GM10248 (cell line): ENCODE measurements at regions of chr4 and their contacts with region 1.

Region 1: DNA sequence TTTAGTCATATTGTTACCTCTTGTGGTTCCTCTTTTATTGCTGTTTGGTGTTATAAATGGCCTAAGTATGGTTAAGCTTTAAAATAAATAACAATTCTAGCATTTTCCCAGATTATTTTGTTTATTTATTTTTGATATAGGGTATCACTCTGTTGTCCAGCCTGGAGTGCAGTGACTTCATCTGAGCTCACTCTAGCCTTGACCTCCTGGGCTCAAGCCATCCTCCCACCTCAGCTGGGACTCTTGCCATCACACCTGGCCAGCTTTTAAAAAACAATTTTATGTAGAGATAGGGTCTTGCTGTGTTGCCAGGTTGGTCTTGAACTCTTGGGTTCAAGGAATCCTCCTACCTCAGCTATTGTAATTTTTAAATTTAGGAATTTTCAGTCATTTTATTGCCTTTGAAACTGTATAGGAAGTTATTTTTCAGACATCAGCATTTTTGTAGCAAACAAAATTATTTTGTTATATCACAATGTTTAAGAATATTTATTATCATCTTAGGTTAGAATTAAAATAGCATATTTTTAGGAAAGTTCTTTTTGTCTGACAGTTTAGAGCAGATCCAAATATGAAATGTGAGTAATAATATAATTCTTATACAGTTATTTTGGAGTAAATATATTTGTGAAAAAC is 66.3 kb upstream of the RHOH start:
- DNase-seq: no peak
- CTCF ChIP-seq: no peak

Region 2: GRCh38 chr4:39846120-39846519 is 284.4 kb before region 1 on chr4:
- CTCF ChIA-PET with region 1: no interaction called
- POLR2A ChIA-PET with region 1: no interaction called
- DNase-seq: no peak
- CTCF ChIP-seq: no peak

Region 3: GRCh38 chr4:39950861-39951481 is 179.5 kb before region 1 on chr4:
- CTCF ChIA-PET with region 1: no interaction called
- POLR2A ChIA-PET with region 1: no interaction called
- DNase-seq: no peak
- CTCF ChIP-seq: no peak

Region 4: GRCh38 chr4:40118861-40119260 is 11.7 kb before region 1 on chr4:
- CTCF ChIA-PET with region 1: interaction called, 10 read pairs
- POLR2A ChIA-PET with region 1: no interaction called
- DNase-seq: no peak
- CTCF ChIP-seq: no peak

Region 5: DNA sequence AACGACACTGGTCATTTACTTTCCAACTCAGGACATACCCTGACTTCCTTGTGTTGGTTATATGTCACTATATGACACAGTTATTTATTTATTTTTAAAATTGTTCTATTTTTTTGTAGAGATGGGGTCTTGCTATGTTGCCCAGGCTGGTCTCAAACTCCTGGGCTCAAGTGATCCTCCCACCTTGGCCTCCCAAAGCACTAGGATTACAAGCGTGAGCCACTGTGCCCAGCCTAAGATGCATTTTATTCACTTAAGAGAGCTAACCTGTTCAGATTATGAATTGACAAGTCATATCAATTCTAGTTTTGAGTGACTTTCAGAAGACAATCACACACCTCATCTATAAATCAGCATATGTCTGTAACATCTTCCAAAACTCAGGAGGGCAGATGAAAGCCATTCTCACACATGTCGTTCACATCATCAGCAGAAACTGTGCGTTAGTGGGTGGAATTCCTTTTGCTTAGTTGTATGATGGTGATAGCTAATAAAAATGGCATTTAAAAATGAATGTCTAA is 56.9 kb after region 1 on chr4:
- CTCF ChIA-PET with region 1: no interaction called
- POLR2A ChIA-PET with region 1: no interaction called
- DNase-seq: no peak
- CTCF ChIP-seq: no peak

Region 6: DNA sequence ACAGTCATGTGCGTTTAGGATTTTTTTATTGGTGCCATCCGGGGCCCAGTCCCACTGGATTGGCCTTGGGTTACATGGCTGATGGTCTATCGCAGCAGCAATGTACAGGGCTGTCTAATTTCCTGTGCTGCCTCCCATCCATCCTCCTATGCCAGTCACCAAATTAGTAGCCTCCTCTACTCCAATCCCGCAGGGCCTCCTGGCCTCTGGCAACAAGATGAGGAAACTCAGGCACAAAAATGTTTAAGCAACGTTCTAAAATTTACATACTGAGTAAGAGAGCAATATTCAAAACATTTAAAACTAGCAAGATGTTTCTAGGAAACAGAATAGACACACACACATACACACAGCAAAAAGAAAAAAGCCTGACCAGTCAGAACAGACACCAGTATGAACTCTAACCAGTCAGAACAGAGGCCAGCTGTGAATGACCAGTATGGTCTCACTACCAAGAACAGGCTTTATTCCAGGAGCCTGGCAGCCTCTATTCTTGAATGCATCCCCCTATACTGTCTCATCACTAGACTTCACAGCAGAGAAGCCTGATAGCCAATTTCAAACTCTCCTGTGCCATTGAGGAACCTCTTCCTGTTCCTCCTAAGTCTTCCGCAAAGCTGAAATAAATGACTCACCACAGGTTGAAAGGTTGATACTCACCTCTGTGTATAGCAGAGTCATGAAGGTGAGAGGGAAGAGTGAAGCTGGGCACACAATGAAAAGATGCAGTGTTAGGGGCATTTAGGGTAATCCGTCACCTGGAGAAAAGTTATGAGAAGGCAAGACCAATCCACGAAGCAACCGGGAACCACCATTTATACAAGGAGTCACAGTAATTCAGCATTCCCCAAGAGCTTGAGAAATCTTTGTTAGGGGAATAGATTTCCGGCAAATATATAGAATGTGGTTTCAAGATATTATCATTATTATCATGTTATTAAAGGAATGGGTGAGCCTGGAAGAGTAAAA is 247.3 kb after region 1 on chr4:
- CTCF ChIA-PET with region 1: no interaction called
- POLR2A ChIA-PET with region 1: no interaction called
- DNase-seq: no peak
- CTCF ChIP-seq: no peak